ENCODE measurements at regions of chr5 and their contacts with region 1.

Region 1: GRCh38 chr5:109409844-109410388 is at the start of gene PJA2:
- DNase-seq: peak; percentile 94 to 98 (median 98)
- ATAC-seq: peak; percentile 88
- H3K4me3 ChIP-seq: peak within 1 kb of the TSS; percentile 77
- H3K4me3 Mint-ChIP-seq: peak within 1 kb of the TSS; percentile 89 to 100 (median 98)
- H3K27ac ChIP-seq: peak within 1 kb of the TSS; percentile 99
- H3K27ac Mint-ChIP-seq: peak within 1 kb of the TSS; percentile 97 to 100 (median 99)
- H3K4me1 ChIP-seq: peaks cover 8 to 19% of the 10 kb centered on the region in 2 donors
- H3K4me1 Mint-ChIP-seq: peaks cover 24 to 50% (median 42%) of the 10 kb centered on the region in 7 donors
- H3K27me3 ChIP-seq: no peaks in the 10 kb centered on the region
- H3K27me3 Mint-ChIP-seq: peaks cover 0 to 2% (median 0%) of the 10 kb centered on the region in 5 donors
- total RNA-seq, gene PJA2: 59.9 to 89.9 (median 76.2) TPM

Region 2: GRCh38 chr5:108727651-108728565 is 682.0 kb before region 1 on chr5:
- CTCF ChIA-PET with region 1: no interaction called
- POLR2A ChIA-PET with region 1: interaction called, 4 read pairs
- intact Hi-C with region 1: loop called (anchors 1 to 5 kb)
- DNase-seq: peak; percentile 16 to 47 (median 30)
- ATAC-seq: peak; percentile 86
- H3K4me3 ChIP-seq: peak overlapping the region; percentile 79
- H3K4me3 Mint-ChIP-seq: peak overlapping the region; percentile 62 to 94 (median 87)
- H3K27ac ChIP-seq: peak overlapping the region; percentile 60
- H3K27ac Mint-ChIP-seq: peak overlapping the region; percentile 10 to 92 (median 70)
- H3K4me1 ChIP-seq: peaks cover 6 to 8% of the 10 kb centered on the region in 2 donors
- H3K4me1 Mint-ChIP-seq: peaks cover 11 to 26% (median 20%) of the 10 kb centered on the region in 7 donors
- H3K27me3 ChIP-seq: peaks cover 0 to 2% of the 10 kb centered on the region in 2 donors
- H3K27me3 Mint-ChIP-seq: peaks cover 16 to 73% (median 22%) of the 10 kb centered on the region in 5 donors

Region 3: DNA sequence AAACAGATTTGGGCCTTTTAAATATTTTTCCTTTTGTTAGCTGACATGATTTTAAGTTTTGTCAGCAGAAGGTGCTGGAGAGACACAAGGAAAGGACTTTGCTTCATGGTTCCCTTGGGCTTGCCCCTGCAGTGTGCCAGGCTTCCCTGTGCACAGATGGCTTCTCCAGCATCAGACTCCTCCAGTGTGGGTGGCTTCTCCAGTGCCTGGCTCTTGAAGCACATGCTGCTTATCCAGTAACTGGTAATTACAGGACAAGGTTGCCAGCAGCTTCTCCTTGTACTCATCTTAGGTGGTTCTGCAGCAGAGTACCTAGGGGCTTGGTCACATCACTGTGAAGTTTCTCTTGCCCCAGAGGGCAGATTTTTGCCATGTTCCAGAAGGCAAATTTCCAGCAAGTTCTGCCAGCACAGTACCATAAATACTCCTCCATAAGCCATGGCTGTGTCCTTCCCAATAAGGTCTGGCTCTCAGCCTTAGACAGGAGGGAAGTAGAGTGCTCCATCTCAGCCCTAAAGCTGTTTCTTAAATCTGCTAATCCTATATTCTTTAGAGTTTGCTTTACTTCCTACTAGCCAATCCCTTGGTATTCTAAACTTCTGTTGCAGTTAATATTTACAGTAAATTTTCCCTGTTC is 62.5 kb before region 1 on chr5:
- CTCF ChIA-PET with region 1: no interaction called
- POLR2A ChIA-PET with region 1: interaction called, 4 read pairs
- intact Hi-C with region 1: loop called in 1 of 2 experiments (anchors 2 kb)
- DNase-seq: no peak
- ATAC-seq: peak; percentile 14
- H3K4me3 ChIP-seq: no peak overlapping the region
- H3K4me3 Mint-ChIP-seq: no peak overlapping the region
- H3K27ac ChIP-seq: no peak overlapping the region
- H3K27ac Mint-ChIP-seq: peak overlapping the region in 6 of 9 donors; percentile 13 to 70 (median 34)
- H3K4me1 ChIP-seq: no peaks in the 10 kb centered on the region
- H3K4me1 Mint-ChIP-seq: peaks cover 4 to 34% (median 9%) of the 10 kb centered on the region in 7 donors
- H3K27me3 ChIP-seq: no peaks in the 10 kb centered on the region
- H3K27me3 Mint-ChIP-seq: no peaks in the 10 kb centered on the region

Region 4: DNA sequence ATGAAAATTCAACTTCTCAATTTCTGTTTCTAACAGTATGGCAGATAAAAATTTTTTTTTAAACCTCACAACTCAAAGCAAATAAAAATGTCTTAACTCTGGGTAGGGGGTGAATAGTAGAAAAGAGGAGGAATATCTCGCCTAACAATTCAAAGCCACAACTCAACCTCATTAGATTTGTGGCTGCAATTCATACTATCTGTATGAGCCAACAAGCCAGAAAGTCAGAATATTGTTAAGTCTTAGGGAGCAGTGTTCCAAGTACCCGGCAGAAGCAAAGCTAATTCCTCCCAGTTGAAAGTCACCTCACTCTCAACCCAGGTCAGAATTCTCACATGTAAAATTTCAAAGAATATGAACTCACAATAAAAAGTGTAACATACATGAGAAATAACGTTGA is 15.1 kb before region 1 on chr5:
- CTCF ChIA-PET with region 1: no interaction called
- POLR2A ChIA-PET with region 1: interaction called, 12 read pairs
- intact Hi-C with region 1: loop called (anchors 1 to 2 kb)
- DNase-seq: no peak
- ATAC-seq: no peak
- H3K4me3 ChIP-seq: no peak overlapping the region
- H3K4me3 Mint-ChIP-seq: peak overlapping the region in 7 of 10 donors; percentile 10 to 57 (median 37)
- H3K27ac ChIP-seq: no peak overlapping the region
- H3K27ac Mint-ChIP-seq: peak overlapping the region in 1 of 9 donors; percentile 30
- H3K4me1 ChIP-seq: peaks cover 11 to 23% of the 10 kb centered on the region in 2 donors
- H3K4me1 Mint-ChIP-seq: peaks cover 37 to 93% (median 88%) of the 10 kb centered on the region in 7 donors
- H3K27me3 ChIP-seq: no peaks in the 10 kb centered on the region
- H3K27me3 Mint-ChIP-seq: no peaks in the 10 kb centered on the region

Region 5: DNA sequence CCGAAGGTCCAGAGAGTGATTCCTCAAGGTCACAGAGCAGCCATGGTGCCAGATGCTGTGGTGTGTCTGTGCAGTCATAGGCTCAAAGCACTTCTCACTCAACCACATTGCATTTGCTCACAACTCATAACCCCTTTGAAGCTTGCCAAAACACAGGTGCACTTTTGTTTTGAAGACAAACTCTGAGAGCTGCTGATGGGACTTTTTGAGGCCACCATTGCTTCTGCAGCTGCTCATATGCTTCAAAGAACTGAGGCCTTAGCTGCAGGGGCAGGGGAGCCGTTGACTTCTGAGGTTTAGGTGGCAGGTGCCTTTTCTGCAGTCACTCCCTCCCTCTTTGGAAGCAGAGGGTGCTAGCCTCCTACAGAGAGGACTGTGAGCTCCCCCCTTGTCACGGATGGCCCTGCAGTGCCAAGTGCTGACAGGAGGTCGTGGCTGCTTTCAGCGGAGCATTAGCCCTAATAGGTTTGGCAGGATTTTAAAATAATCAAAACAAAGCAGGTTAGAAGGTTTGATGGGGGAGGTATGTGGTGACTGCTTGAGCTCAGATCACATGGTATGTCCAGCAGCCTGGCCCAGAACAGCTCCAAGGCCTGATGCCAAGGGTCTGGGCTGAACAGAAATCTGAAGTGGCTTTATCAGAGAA is 511.9 kb after region 1 on chr5:
- CTCF ChIA-PET with region 1: no interaction called
- POLR2A ChIA-PET with region 1: interaction called, 4 read pairs
- intact Hi-C with region 1: loop called in 1 of 2 experiments (anchors 1 kb)
- DNase-seq: peak; percentile 13 to 90 (median 84)
- ATAC-seq: peak; percentile 92
- H3K4me3 ChIP-seq: peak overlapping the region; percentile 1
- H3K4me3 Mint-ChIP-seq: peak overlapping the region; percentile 75 to 91 (median 82)
- H3K27ac ChIP-seq: peak overlapping the region; percentile 78
- H3K27ac Mint-ChIP-seq: peak overlapping the region; percentile 89 to 100 (median 97)
- H3K4me1 ChIP-seq: peaks cover 34 to 45% of the 10 kb centered on the region in 2 donors
- H3K4me1 Mint-ChIP-seq: peaks cover 17 to 76% (median 62%) of the 10 kb centered on the region in 7 donors
- H3K27me3 ChIP-seq: no peaks in the 10 kb centered on the region
- H3K27me3 Mint-ChIP-seq: no peaks in the 10 kb centered on the region

Region 6: DNA sequence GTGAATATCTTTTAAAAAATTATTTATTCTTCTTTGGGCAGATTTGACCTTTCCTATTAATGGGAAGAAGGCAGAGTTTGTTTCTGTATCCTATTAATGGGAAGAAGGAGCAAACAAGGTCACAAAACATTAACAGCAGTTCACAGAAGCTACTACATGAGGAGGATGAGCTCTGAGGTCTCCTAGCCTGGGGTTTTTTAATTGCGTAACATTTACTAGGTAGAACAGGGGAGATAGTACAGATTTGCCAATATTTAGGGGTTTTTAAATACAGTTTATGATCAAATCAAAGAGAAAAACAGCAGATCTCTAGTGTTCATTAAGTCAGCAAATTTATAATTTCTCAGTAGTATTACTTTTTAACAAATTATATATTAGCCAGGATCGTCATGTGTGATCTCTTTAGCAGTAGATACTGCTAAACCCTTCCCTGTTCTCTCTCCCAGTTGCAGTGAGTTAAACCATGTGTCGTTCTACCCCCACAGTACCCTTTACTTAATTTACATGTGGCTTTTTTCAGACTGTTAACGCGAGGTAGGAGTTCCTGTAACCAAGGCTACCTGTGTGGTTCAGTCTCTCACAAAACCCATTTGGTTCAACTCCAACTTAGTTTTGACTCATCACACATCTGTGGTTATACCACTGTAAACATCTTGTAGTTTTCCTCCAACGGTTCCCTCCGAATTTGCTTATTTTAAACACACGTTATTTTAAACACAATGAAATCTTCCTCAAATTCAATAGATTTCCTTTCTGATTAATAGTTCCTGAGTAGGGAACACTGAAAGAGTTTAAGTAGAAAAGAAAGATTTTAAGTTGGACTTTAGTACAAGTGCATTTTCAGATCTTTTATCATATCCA is 1342.2 kb after region 1 on chr5:
- CTCF ChIA-PET with region 1: no interaction called
- POLR2A ChIA-PET with region 1: no interaction called
- intact Hi-C with region 1: loop called in 1 of 2 experiments (anchors 5 kb)
- DNase-seq: peak in 2 of 9 donors; percentile 8 to 30
- ATAC-seq: peak; percentile 82
- H3K4me3 ChIP-seq: no peak overlapping the region
- H3K4me3 Mint-ChIP-seq: peak overlapping the region in 1 of 10 donors; percentile 68
- H3K27ac ChIP-seq: no peak overlapping the region
- H3K27ac Mint-ChIP-seq: peak overlapping the region in 8 of 9 donors; percentile 5 to 84 (median 59)
- H3K4me1 ChIP-seq: peaks cover 0 to 12% of the 10 kb centered on the region in 2 donors
- H3K4me1 Mint-ChIP-seq: peaks cover 15 to 47% (median 34%) of the 10 kb centered on the region in 7 donors
- H3K27me3 ChIP-seq: no peaks in the 10 kb centered on the region
- H3K27me3 Mint-ChIP-seq: no peaks in the 10 kb centered on the region

Region 7: GRCh38 chr5:111229871-111230810 is 1820.2 kb after region 1 on chr5:
- CTCF ChIA-PET with region 1: no interaction called
- POLR2A ChIA-PET with region 1: interaction called, 4 read pairs
- intact Hi-C with region 1: loop called (anchors 5 to 10 kb)
- DNase-seq: peak in 7 of 9 donors; percentile 52 to 86 (median 79)
- ATAC-seq: peak; percentile 73
- H3K4me3 ChIP-seq: peak overlapping the region; percentile 37
- H3K4me3 Mint-ChIP-seq: peak overlapping the region; percentile 79 to 98 (median 90)
- H3K27ac ChIP-seq: peak overlapping the region; percentile 93
- H3K27ac Mint-ChIP-seq: peak overlapping the region; percentile 93 to 100 (median 98)
- H3K4me1 ChIP-seq: peaks cover 64 to 83% of the 10 kb centered on the region in 2 donors
- H3K4me1 Mint-ChIP-seq: peaks cover 38 to 78% (median 73%) of the 10 kb centered on the region in 7 donors
- H3K27me3 ChIP-seq: no peaks in the 10 kb centered on the region
- H3K27me3 Mint-ChIP-seq: no peaks in the 10 kb centered on the region

Measured in naive thymus-derived CD4-positive, alpha-beta T cell (primary cell).